Transverse colon (tissue), 4 donors: ENCODE measurements at regions of chr4 and their contacts with region 1.

Region 1: GRCh38 chr4:153344131-153345010 is at the start of gene MND1:
- DNase-seq: peak; percentile 86
- H3K4me3 ChIP-seq: peak within 1 kb of the TSS; percentile 51 to 90 (median 80)
- H3K27ac ChIP-seq: peak within 1 kb of the TSS in 2 of 4 donors; percentile 51 to 77
- H3K4me1 ChIP-seq: peaks cover 0 to 20% (median 6%) of the 10 kb centered on the region in 4 donors
- H3K27me3 ChIP-seq: no peaks in the 10 kb centered on the region
- CTCF ChIP-seq: peak; percentile 67 to 98 (median 96)
- EP300 ChIP-seq: no peak
- POLR2A ChIP-seq: no peak
- total RNA-seq, gene MND1: 0.80 to 3.2 (median 1.4) TPM in 3 of 4 donors, not detected in the other

Region 2: GRCh38 chr4:152679414-152680281 is 664.7 kb before region 1 on chr4 and contains the start of gene TMEM154:
- in situ Hi-C with region 1: no loop called
- intact Hi-C with region 1: no loop called
- DNase-seq: peak; percentile 74
- H3K4me3 ChIP-seq: peak within 1 kb of the TSS; percentile 39 to 64 (median 44)
- H3K27ac ChIP-seq: peak within 1 kb of the TSS; percentile 6 to 73 (median 64)
- H3K4me1 ChIP-seq: peaks cover 0 to 20% (median 6%) of the 10 kb centered on the region in 4 donors
- H3K27me3 ChIP-seq: no peaks in the 10 kb centered on the region
- CTCF ChIP-seq: no peak
- EP300 ChIP-seq: no peak
- POLR2A ChIP-seq: peak; percentile 74
- total RNA-seq, gene TMEM154: 1.8 to 5.4 (median 3.9) TPM

Region 3: GRCh38 chr4:153318696-153319320 is 25.6 kb before region 1 on chr4:
- in situ Hi-C with region 1: no loop called
- intact Hi-C with region 1: no loop called
- DNase-seq: no peak
- H3K4me3 ChIP-seq: no peak overlapping the region
- H3K27ac ChIP-seq: no peak overlapping the region
- H3K4me1 ChIP-seq: no peaks in the 10 kb centered on the region
- H3K27me3 ChIP-seq: no peaks in the 10 kb centered on the region
- CTCF ChIP-seq: peak; percentile 47 to 59 (median 56)
- EP300 ChIP-seq: no peak
- POLR2A ChIP-seq: no peak

Region 4: DNA sequence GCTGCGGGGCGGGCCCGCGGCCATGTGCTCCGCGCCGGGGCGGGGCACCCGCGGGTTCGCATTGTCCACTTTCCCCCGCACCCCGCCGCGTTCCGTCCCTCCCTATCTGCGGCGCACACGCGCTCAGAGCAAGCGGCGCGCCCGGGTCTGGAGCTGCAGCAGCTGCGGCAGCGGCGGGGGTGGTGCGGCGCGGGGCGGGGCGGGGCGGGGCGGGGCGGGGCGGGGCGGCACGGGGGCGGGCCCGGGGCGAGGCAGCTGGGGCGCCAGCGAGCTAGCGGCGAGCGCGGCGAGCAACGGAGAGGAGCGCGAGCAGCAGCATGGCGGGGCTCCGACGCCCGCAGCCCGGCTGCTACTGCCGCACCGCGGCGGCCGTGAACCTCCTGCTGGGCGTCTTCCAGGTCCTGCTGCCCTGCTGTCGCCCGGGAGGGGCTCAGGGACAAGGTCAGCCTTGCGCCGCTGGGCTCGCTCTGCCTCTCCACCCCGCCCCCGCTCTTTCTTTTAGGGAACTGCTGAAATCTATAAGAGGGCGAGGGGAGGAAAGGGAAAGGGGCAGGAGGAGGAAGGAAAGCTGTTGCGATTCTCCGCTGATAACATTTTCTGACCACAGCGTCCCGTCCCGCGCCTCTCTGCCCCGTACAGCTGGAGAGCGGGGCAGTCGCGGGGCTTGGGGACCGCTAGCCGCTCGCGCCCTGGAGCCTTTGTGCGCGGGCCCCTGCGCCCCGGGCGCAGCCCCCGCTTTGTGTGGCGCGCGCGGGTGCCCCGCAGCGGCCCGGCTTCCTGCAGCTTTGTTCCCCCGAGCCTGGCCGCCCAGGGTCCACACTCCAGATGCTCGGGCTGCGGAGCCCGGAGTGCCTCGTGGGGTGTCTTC is 121.9 kb after region 1 on chr4 and contains the start of gene TMEM131L:
- in situ Hi-C with region 1: no loop called
- intact Hi-C with region 1: no loop called
- DNase-seq: peak; percentile 72
- H3K4me3 ChIP-seq: peak within 1 kb of the TSS; percentile 81 to 93 (median 88)
- H3K27ac ChIP-seq: peak within 1 kb of the TSS; percentile 86 to 93 (median 90)
- H3K4me1 ChIP-seq: peaks cover 8 to 50% (median 42%) of the 10 kb centered on the region in 4 donors
- H3K27me3 ChIP-seq: no peaks in the 10 kb centered on the region
- CTCF ChIP-seq: peak in 2 of 5 experiments; percentile 1 to 12
- EP300 ChIP-seq: no peak
- POLR2A ChIP-seq: peak; percentile 60
- total RNA-seq, gene TMEM131L: 5.2 to 14.8 (median 8.3) TPM

Region 5: DNA sequence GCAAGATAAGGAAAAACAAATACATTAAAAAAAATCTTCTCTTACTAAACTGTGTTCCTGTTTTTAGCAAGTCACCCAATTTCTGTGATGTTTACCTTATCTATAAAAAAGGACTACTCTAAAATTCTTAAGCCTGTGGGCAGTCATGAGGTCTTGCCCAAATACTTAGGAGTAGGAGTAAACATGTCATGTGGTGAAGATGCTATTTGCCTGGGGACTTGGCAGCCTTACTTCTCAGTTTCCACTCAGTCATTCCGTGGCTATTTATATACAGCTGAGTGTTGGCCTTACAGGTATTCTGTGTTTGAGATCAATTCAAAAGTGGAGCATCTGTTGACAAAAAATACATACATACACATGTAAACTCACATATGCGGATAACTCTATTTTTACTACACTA is 249.8 kb after region 1 on chr4:
- in situ Hi-C with region 1: loop called in 1 of 4 experiments (anchors 25 kb)
- intact Hi-C with region 1: no loop called
- DNase-seq: no peak
- H3K4me3 ChIP-seq: no peak overlapping the region
- H3K27ac ChIP-seq: no peak overlapping the region
- H3K4me1 ChIP-seq: no peaks in the 10 kb centered on the region
- H3K27me3 ChIP-seq: no peaks in the 10 kb centered on the region
- CTCF ChIP-seq: no peak
- EP300 ChIP-seq: no peak
- POLR2A ChIP-seq: no peak

Region 6: DNA sequence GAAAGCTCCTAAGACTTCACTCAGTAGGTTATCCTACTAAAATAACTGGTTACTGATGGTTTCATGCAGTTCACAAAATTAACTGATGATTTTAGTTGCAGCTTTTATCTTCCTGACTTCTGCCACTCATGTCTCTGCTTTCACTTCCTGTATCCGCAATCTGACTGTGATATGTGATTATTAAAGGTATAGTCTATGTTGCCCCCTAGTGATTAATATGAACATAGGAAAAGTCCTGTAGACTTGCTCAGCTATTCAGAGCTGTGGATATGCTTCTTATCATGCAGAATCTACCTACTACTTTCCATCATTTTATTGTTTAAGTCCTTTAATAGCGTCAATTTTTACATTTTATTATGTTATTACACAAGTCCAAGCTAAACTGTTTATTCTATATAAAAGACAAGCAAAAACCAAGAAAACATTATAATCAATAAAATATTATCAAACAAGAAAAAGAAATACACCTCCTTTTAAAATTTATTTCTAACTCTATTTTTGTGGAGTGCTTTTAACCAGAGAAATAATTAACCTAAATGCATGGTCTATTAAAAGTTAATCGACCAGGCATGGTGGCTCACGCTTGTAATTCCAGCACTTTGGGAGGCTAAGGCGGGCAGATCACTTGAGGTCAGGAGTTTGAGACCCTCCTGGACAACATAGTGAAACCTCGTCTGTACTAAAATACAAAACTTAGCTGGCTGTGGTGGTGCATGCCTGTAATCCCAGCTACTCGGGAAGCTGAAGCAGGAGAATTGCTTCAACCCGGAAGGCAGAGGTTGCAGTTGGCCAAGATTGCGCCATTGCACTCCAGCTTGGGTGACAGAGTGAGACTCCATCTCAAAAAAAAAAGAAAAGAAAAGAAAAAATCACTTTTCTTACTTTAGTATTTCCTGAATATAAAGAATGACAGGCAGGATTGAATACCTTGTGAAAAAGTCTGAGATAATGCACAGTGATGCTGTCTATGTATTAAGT is 299.3 kb after region 1 on chr4:
- in situ Hi-C with region 1: no loop called
- intact Hi-C with region 1: loop called (anchors 10 kb)
- DNase-seq: no peak
- H3K4me3 ChIP-seq: no peak overlapping the region
- H3K27ac ChIP-seq: no peak overlapping the region
- H3K4me1 ChIP-seq: no peaks in the 10 kb centered on the region
- H3K27me3 ChIP-seq: no peaks in the 10 kb centered on the region
- CTCF ChIP-seq: peak; percentile 31 to 50 (median 40)
- EP300 ChIP-seq: no peak
- POLR2A ChIP-seq: no peak

Region 7: DNA sequence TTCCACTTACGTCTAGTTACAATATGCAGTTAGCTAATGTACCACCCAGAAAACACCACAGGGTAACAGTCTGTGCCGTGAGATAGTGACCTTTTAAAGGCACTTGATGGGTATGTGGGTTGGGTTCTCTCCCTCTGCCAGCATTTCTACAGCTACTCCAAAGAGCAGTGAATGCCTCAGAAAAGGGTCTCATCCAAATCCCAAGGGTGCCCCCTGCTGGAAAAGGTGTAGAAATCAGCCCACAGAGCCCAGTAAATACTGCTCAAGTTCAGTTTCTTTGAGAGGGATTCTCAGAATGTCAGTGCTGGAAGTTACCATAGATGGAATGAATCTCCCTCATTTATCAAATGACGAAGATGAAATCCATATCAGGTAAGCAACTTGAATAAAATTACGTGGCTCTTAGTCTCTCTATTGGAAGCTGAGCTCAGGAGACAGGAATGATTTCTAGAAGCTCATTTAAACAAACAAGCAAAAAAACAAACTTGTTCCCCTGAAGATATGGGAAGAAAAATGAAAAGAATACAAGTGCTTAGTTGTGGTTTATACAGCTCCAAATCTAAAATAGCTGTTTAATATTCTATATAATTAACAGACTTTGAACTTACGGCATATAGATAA is 405.9 kb after region 1 on chr4:
- in situ Hi-C with region 1: no loop called
- intact Hi-C with region 1: loop called (anchors 10 kb)
- DNase-seq: peak; percentile 43
- H3K4me3 ChIP-seq: no peak overlapping the region
- H3K27ac ChIP-seq: no peak overlapping the region
- H3K4me1 ChIP-seq: no peaks in the 10 kb centered on the region
- H3K27me3 ChIP-seq: peaks cover 3% of the 10 kb centered on the region
- CTCF ChIP-seq: peak; percentile 35 to 52 (median 49)
- EP300 ChIP-seq: no peak
- POLR2A ChIP-seq: no peak